ENCODE measurements at regions of chr2 and their contacts with region 1.

Region 1: DNA sequence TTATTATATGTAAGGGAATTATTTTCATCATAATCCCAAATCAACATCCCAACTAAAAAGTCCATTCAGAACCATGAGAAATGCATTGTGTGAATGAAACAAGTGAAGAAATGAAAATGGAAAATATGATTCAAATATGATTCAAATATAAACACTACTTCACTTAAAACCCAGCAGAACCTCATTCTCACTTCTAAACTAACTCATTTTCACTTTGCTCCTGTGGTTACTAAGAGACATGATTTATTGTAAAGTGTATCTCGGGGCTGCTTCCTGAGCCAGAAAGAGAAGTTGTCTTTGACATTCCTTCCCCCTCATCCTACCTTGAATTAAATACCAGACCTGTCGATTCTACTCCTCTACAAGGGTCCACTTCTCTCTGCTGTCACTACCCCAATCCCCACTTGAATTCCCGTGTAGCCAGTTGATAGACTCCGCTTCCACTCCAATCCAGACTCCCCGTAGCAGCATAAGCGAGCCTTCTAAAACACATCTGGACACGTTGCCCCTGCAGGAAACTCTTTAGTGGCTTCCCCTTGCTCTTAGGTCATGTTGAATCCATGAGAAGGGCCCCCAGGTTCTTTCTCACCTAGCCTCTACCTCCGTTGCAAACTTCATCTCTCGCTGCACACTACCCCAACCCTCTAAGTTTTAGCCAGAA is 697.0 kb upstream of the ID2 start:
- DNase-seq: no peak
- H3K4me3 Mint-ChIP-seq: peak overlapping the region; percentile 13
- H3K27ac Mint-ChIP-seq: peak overlapping the region; percentile 87
- H3K4me1 Mint-ChIP-seq: peaks cover 17% of the 10 kb centered on the region
- H3K27me3 Mint-ChIP-seq: no peaks in the 10 kb centered on the region

Region 2: GRCh38 chr2:6977113-6977741 is 1007.6 kb before region 1 on chr2:
- intact Hi-C with region 1: no loop called
- DNase-seq: no peak
- H3K4me3 Mint-ChIP-seq: no peak overlapping the region
- H3K27ac Mint-ChIP-seq: no peak overlapping the region
- H3K4me1 Mint-ChIP-seq: peaks cover 3% of the 10 kb centered on the region
- H3K27me3 Mint-ChIP-seq: no peaks in the 10 kb centered on the region

Region 3: GRCh38 chr2:7845332-7845731 is 139.5 kb before region 1 on chr2:
- intact Hi-C with region 1: loop called (anchors 5 kb)
- DNase-seq: peak; percentile 52
- H3K4me3 Mint-ChIP-seq: no peak overlapping the region
- H3K27ac Mint-ChIP-seq: peak overlapping the region; percentile 76
- H3K4me1 Mint-ChIP-seq: peaks cover 42% of the 10 kb centered on the region
- H3K27me3 Mint-ChIP-seq: no peaks in the 10 kb centered on the region

Region 4: GRCh38 chr2:7930800-7931635 is 53.8 kb before region 1 on chr2:
- intact Hi-C with region 1: loop called (anchors 2 kb)
- DNase-seq: peak; percentile 54
- H3K4me3 Mint-ChIP-seq: peak overlapping the region; percentile 1
- H3K27ac Mint-ChIP-seq: peak overlapping the region; percentile 76
- H3K4me1 Mint-ChIP-seq: peaks cover 10% of the 10 kb centered on the region
- H3K27me3 Mint-ChIP-seq: no peaks in the 10 kb centered on the region

Region 5: DNA sequence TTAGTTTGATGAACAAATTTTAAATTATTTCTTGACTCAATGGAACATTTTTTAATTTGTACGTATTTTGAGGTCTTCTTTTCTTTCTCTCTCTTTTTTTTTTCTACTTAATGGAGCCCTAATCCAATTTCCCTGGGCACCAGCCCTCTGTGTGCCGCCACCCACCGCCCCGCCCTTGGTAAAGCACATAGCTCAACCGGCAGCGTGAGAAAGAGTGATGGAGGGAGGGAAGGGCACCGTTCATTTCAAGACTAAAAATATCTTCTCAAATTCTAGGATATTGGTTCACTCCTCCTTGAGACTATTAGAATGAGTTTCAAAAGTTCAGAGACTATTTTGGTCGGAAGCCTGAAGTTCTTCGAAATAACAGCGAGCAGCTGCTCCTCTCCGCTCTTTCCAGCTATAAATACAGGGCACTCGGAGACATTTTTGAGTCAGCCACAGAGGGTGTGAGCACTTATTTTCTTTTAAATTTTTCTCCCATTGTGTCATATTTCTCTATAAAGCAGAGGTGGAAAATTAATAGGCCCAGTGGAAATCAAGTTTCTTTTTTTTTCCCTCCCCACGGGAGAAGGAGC is 34.7 kb before region 1 on chr2:
- intact Hi-C with region 1: no loop called
- DNase-seq: no peak
- H3K4me3 Mint-ChIP-seq: no peak overlapping the region
- H3K27ac Mint-ChIP-seq: no peak overlapping the region
- H3K4me1 Mint-ChIP-seq: no peaks in the 10 kb centered on the region
- H3K27me3 Mint-ChIP-seq: peaks cover 4% of the 10 kb centered on the region

Region 6: DNA sequence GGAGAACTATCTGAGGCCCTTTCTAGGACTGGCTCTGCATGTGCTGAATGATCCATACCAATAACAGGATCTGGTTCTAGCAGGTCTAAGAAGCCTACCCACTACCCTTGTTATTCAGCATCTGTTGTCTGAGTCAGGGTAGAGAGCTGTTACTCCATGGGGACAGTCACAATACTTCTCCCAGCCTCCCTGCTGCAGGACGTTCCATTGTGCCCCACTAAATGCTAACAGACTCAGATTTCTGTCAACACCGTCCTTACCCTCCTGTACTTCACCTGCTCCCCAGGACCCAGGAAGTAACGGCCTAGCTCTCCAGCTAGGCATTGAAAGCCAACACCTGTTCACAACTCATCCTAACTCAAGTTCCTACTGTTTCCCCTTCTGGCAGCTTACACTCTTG is 22.7 kb before region 1 on chr2:
- intact Hi-C with region 1: loop called (anchors 1 kb)
- DNase-seq: no peak
- H3K4me3 Mint-ChIP-seq: no peak overlapping the region
- H3K27ac Mint-ChIP-seq: peak overlapping the region; percentile 17
- H3K4me1 Mint-ChIP-seq: peaks cover 8% of the 10 kb centered on the region
- H3K27me3 Mint-ChIP-seq: no peaks in the 10 kb centered on the region

Region 7: DNA sequence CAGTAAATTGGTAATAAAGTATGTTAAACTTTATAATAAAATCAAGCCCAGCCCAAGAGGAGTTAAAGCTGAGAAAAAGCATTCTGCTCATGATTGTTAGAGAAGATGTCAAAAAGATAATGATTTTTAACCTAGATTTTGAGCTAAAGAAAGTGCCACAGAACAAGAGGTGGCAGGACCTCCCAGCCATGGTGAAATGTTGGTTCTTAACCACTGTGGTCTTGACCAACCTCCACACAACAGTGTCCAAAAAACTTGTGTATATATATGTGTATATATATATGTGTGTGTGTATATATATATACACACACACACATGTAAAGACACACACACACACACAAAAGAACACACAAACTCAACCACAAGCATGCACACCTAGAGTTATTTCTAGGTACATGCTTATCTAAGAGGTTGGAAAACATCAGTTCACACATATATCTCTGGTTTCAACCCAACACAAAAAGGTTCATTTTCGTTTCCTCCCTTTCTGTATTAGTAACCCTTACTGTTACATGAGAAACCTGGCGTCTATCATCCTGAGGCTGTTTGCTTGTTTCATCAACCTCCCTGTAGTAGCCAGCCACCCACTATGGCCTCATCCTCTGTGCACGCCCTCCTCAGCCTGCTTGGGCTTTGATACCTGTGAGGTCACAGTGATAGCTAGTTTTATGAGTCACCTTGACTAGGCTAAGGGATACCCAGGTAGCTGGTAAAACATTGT is 65.2 kb after region 1 on chr2:
- intact Hi-C with region 1: loop called (anchors 2 kb)
- DNase-seq: peak; percentile 81
- H3K4me3 Mint-ChIP-seq: peak overlapping the region; percentile 7
- H3K27ac Mint-ChIP-seq: peak overlapping the region; percentile 84
- H3K4me1 Mint-ChIP-seq: peaks cover 23% of the 10 kb centered on the region
- H3K27me3 Mint-ChIP-seq: no peaks in the 10 kb centered on the region

Region 8: GRCh38 chr2:8138923-8139667 is 154.3 kb after region 1 on chr2:
- intact Hi-C with region 1: no loop called
- DNase-seq: no peak
- H3K4me3 Mint-ChIP-seq: no peak overlapping the region
- H3K27ac Mint-ChIP-seq: no peak overlapping the region
- H3K4me1 Mint-ChIP-seq: peaks cover 9% of the 10 kb centered on the region
- H3K27me3 Mint-ChIP-seq: peaks cover 2% of the 10 kb centered on the region

Region 9: DNA sequence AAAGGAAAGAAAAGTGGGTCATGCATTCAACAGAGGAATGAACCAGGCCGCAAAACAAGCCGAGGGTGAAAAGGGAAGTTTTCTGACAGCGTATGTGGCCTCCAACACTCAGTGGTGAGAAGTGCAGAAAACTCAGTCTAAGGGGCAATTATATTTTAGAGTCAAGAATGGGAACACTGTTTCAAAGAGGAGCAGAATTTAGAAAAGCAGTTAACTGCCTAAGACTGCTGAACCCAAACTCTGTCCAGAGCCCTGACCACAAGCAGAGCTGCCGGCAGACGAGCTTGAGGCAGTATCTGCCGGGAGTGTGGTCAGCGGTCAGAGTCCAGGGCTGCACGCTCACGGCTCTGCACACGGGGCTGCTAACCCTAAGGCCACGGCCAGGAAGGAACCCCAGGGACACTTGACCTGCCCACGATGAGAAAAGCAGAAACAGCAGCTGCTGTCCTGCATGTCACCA is 350.1 kb after region 1 on chr2:
- intact Hi-C with region 1: loop called (anchors 1 kb)
- DNase-seq: no peak
- H3K4me3 Mint-ChIP-seq: no peak overlapping the region
- H3K27ac Mint-ChIP-seq: no peak overlapping the region
- H3K4me1 Mint-ChIP-seq: peaks cover 19% of the 10 kb centered on the region
- H3K27me3 Mint-ChIP-seq: peaks cover 11% of the 10 kb centered on the region